Activated CD8-positive, alpha-beta T cell treated with anti-CD3 and anti-CD28 coated beads, Interleukin-2, amount 10 ng/mL, durations not matched to agents 7 days and 5 days (primary cell): ENCODE measurements at regions of chr1 and their contacts with region 1.

Region 1: DNA sequence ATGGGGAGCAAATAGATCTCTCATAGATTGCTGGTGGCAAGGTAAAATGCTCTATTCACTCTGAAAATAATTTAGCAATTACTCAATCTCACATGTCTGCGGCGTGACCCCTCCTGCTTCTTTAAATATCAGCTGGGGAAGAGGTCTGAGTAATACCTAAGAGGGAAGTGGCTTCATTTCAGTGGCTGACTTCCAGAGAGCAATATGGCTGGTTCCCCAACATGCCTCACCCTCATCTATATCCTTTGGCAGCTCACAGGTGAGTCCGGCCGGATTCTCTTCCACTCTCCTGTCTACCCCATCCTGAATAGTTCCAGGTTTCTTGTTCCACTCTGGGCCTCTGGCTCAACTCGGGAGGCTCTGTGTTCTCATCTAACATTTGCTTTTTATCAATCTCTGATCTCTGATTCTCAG is at the start of gene SLAMF7:
- DNase-seq: peak; percentile 68
- ATAC-seq: peak; percentile 60
- H3K4me3 Mint-ChIP-seq: peak within 1 kb of the TSS; percentile 85
- H3K27ac Mint-ChIP-seq: peak within 1 kb of the TSS; percentile 81
- H3K4me1 Mint-ChIP-seq: peaks cover 69% of the 10 kb centered on the region
- H3K27me3 Mint-ChIP-seq: no peaks in the 10 kb centered on the region
- total RNA-seq, gene SLAMF7: 88.5 to 102 TPM

Region 2: GRCh38 chr1:160522622-160523345 is 216.3 kb before region 1 on chr1 and contains the start of gene SLAMF6:
- CTCF ChIA-PET with region 1: no interaction called
- POLR2A ChIA-PET with region 1: no interaction called
- DNase-seq: peak; percentile 68
- ATAC-seq: peak; percentile 62
- H3K4me3 Mint-ChIP-seq: peak within 1 kb of the TSS; percentile 83
- H3K27ac Mint-ChIP-seq: peak within 1 kb of the TSS; percentile 93
- H3K4me1 Mint-ChIP-seq: peaks cover 62% of the 10 kb centered on the region
- H3K27me3 Mint-ChIP-seq: no peaks in the 10 kb centered on the region
- total RNA-seq, gene SLAMF6: 23.9 to 24.7 TPM

Region 3: DNA sequence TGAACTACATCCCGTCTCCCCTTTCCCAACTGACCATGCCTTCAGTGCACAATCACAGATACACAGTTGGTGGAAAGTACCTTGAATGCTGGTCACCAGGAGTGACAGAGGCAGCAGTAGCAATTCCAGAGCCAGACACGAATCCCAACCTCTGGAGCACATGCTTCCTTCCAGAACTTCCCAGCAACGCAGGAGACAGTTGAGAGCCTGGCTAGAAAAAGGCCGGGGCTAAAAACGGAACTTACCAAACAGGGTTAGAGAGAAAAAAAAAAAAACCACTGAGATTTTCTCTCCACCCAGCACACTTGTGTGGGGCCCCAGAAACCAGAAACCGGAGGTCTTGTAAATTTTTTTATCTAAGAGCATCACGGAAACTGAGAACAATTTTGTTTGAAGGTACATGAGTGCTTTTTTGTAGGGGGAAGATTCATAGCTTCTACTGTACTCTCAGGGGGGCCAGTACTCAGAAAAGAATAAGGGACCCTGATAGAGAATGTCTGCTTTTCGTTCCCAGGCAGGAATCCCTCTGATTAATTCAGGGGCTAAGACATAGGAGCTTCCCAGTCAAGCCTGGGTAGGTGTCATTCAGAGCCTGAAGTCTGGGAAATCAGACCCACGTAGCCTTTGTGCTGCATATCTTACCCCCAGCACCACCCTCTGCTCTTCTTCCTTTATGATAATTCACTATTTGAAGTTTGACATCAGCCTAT is 27.3 kb before region 1 on chr1 and contains the start of gene CD48:
- CTCF ChIA-PET with region 1: interaction called, 21 read pairs
- POLR2A ChIA-PET with region 1: interaction called, 19 read pairs
- DNase-seq: peak; percentile 79
- ATAC-seq: peak; percentile 48
- H3K4me3 Mint-ChIP-seq: no peak within 1 kb of the TSS
- H3K27ac Mint-ChIP-seq: no peak within 1 kb of the TSS
- H3K4me1 Mint-ChIP-seq: peaks cover 39% of the 10 kb centered on the region
- H3K27me3 Mint-ChIP-seq: no peaks in the 10 kb centered on the region
- total RNA-seq, gene CD48: 325 to 327 TPM

Region 4: GRCh38 chr1:160755911-160756848 is 17.1 kb after region 1 on chr1:
- CTCF ChIA-PET with region 1: interaction called, 18 read pairs
- POLR2A ChIA-PET with region 1: interaction called, 33 read pairs
- DNase-seq: peak; percentile 74
- ATAC-seq: peak; percentile 82
- H3K4me3 Mint-ChIP-seq: peak overlapping the region; percentile 30
- H3K27ac Mint-ChIP-seq: peak overlapping the region; percentile 93
- H3K4me1 Mint-ChIP-seq: peaks cover 58% of the 10 kb centered on the region
- H3K27me3 Mint-ChIP-seq: no peaks in the 10 kb centered on the region

Region 5: DNA sequence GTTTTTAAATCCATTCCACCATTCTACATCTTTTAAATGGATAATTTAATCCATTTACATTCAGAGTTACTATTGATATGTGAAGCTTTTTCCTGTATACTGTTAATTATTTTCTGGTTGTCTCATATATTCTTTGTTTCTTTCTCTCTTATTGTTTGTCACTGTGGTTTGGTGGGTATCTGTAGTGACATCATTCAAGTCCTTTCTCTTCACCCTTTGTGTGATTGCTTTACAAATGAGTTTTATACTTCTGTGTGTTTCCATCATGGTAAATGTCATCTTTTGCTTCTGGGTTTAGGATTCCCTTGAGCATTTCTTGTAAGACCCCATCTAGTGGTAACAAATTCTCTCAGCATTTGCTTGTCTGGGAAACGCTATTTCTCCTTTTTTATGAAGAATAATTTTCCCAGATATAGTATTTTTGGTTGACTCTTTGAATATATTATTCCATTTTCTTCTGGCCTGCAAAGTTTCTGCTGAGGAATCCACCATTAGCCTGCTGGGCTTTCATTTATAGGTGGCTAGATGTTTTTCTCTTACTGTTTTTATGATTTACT is 67.1 kb after region 1 on chr1:
- CTCF ChIA-PET with region 1: no interaction called
- POLR2A ChIA-PET with region 1: no interaction called
- DNase-seq: no peak
- ATAC-seq: no peak
- H3K4me3 Mint-ChIP-seq: no peak overlapping the region
- H3K27ac Mint-ChIP-seq: no peak overlapping the region
- H3K4me1 Mint-ChIP-seq: peaks cover 24% of the 10 kb centered on the region
- H3K27me3 Mint-ChIP-seq: no peaks in the 10 kb centered on the region